ENCODE measurements at regions of chr12 and their contacts with region 1.

Region 1: DNA sequence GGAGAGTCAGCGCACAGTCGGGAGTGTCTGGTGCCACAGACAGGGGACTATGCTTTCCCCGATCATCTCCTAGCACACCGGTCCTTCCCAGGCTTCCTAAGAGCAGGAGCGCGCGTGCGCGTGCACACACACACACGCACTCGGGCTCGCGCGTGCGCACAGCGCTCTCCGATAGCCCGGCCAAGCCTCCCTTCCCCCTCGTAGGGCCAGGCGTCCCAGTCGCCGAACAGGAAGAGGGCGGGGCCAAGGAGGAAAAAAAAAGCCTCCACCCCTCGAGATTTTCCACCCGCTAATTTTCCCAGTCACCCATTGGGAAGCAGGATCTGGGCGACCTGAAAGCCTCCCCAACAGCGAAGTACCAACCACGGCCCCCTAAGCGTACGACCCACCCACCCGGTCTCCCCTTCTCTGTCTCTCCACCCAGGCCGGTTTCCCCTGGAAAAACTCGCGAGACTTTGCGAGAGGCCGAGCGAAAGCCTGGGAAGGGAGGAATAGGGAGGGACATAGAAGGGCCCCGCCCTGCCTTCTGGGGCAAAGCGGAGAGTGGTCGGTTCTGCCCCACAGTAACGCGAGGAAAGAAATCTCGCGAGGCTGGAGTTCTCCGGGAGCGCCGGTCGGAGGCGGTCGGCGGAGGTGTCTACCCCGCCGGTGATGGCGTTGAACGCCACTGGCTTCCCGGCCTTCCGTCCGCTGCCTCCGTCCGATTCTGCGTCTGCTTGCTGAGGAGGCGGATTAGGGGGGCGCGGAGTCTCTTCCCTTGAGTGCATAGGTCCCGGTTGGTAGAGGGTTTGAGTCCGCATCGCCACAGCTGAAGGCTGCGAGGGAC is at the starts of genes FGFR1OP2 and INTS13:
- DNase-seq: peak; percentile 98
- H3K4me3 ChIP-seq: peak within 1 kb of the TSS; percentile 89
- H3K27ac ChIP-seq: peak within 1 kb of the TSS; percentile 79
- H3K4me1 ChIP-seq: peaks cover 48% of the 10 kb centered on the region
- CTCF ChIP-seq: no peak
- total RNA-seq, gene FGFR1OP2: 35.0 and 45.0 TPM in 2 replicates
- total RNA-seq, gene INTS13: 33.4 and 34.2 TPM in 2 replicates

Region 2: DNA sequence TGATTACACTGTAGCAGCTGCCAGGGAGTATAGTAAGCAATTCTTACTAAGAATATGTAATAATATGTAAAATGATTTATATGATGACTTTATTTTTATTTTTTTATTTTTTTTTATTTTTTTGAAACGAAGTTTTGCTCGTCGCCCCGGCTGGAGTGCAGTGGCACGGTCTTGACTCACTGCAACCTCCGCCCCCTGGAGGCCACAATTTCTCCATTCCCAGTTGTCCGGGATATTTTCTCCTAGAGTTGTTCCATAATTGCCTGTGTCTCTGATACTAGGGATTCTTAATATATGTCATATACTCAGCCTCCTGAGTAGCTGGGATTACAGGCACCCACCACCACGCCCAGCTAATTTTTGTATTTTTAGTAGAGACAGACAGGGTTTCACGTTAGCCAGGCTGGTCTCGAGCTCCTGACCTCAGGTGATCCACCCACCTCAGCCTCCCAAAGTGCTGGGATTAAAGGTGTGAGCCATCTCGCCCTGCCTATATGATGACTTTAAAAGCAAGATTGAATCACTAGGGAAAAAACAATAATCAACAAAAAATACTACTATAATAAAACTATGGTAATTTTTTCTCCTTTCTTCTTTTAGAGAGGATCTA is 92.9 kb before region 1 on chr12:
- CTCF ChIA-PET with region 1: no interaction called
- POLR2A ChIA-PET with region 1: no interaction called
- intact Hi-C with region 1: loop called (anchors 5 kb)
- DNase-seq: no peak
- H3K4me3 ChIP-seq: no peak overlapping the region
- H3K27ac ChIP-seq: peak overlapping the region; percentile 96
- H3K4me1 ChIP-seq: peaks cover 73% of the 10 kb centered on the region
- CTCF ChIP-seq: peak; percentile 71

Region 3: GRCh38 chr12:27257104-27257843 is 319.2 kb after region 1 on chr12:
- CTCF ChIA-PET with region 1: no interaction called
- POLR2A ChIA-PET with region 1: no interaction called
- intact Hi-C with region 1: no loop called
- DNase-seq: no peak
- H3K4me3 ChIP-seq: no peak overlapping the region
- H3K27ac ChIP-seq: no peak overlapping the region
- H3K4me1 ChIP-seq: no peaks in the 10 kb centered on the region
- CTCF ChIP-seq: no peak